Psoas muscle (tissue), 8 donors: ENCODE measurements at regions of chr12 and their contacts with region 1.

Region 1: GRCh38 chr12:2319742-2320506 is 267.1 kb downstream of the CACNA1C start:
- DNase-seq: no peak
- ATAC-seq: no peak
- H3K4me3 ChIP-seq: no peak overlapping the region
- H3K27ac ChIP-seq: no peak overlapping the region
- H3K4me1 ChIP-seq: peaks cover 24% of the 10 kb centered on the region
- H3K27me3 ChIP-seq: no peaks in the 10 kb centered on the region
- CTCF ChIP-seq: no peak

Region 2: DNA sequence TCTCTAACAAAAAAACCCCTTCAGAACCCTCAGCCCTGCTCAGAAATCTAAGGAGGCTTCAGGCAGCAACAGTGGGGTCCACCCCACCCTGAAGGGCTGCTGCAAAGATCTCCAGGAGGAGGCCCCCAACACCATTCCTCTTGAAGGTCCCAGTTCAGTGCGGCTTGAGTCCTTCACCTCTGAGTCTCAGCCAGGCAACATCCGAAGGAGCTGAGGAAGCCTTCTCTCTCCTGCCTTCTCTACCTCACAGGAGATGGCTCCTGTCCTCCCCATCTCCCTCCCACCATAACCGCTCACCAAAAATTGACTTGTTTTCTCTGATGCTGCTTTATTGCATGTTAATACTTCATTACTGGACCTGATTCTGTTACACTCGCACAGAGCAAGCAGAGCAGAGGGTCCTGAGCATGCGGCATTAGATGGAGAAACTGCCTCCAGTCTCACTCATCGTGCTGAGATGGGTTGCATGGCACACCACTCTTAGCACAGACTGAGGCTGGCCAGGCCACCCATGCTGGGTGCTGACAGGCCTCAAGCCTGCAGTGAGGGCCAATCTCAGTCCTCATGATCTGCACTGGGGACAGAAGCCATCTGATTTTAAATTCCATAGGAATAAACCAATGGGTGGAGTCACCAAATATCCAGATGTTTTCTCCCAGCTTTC is 42.3 kb before region 1 on chr12:
- intact Hi-C with region 1: loop called in 1 of 2 experiments (anchors 1 kb)
- DNase-seq: no peak
- ATAC-seq: no peak
- H3K4me3 ChIP-seq: no peak overlapping the region
- H3K27ac ChIP-seq: no peak overlapping the region
- H3K4me1 ChIP-seq: no peaks in the 10 kb centered on the region
- H3K27me3 ChIP-seq: no peaks in the 10 kb centered on the region
- CTCF ChIP-seq: no peak